Activated B cell treated with CpG ODN at 0.5 μM for 24 hours (primary cell): ENCODE measurements at regions of chr4 and their contacts with region 1.

Region 1: DNA sequence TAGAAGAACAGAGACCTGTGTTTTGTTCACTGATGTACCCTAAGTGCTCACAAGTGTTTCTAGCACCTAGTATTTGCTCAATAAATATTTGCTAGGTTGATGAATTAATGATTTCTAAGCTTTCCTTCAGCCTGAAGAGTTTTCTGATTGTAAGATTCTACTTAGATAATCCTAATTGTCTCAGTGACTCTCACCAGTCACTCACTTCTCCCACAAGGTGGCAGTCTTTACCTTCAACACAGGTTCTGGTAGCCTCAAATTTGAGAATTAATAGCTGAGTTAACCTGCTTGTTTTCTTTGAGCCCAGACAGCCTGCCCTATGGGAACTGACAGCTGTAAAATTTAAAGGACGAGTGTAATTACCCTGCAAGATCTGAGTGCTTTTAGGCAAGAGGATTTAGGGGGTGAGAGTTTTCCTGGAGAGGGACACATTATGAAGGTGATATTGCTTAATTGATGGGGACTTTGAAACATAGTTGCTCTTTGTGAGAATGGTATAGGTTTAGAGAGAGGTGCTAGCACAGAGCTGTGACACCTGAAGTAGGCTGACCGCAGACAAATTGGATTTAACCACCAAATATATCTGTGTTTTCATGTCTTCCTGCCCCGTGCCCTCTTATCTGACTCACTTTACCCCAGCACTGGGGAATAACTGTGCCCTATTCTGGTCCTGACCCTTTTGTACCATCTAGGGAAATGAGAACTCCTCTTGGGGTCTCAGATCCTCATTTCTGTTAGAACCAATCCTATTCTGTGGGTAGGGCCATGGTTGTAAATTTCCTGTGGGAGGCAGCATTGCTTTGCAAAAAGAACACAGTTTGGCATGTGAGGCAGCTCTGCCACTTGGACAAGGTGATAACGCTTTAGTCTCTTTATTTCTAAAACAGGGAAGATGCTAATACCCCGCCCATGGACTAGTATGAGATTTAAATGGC is 27.7 kb downstream of the CD38 start:
- DNase-seq: no peak
- ATAC-seq: peak; percentile 81
- H3K4me3 Mint-ChIP-seq: no peak overlapping the region
- H3K27ac Mint-ChIP-seq: no peak overlapping the region
- H3K4me1 Mint-ChIP-seq: peaks cover 50% of the 10 kb centered on the region
- H3K27me3 Mint-ChIP-seq: no peaks in the 10 kb centered on the region
- CTCF ChIP-seq: peak; percentile 20

Region 2: DNA sequence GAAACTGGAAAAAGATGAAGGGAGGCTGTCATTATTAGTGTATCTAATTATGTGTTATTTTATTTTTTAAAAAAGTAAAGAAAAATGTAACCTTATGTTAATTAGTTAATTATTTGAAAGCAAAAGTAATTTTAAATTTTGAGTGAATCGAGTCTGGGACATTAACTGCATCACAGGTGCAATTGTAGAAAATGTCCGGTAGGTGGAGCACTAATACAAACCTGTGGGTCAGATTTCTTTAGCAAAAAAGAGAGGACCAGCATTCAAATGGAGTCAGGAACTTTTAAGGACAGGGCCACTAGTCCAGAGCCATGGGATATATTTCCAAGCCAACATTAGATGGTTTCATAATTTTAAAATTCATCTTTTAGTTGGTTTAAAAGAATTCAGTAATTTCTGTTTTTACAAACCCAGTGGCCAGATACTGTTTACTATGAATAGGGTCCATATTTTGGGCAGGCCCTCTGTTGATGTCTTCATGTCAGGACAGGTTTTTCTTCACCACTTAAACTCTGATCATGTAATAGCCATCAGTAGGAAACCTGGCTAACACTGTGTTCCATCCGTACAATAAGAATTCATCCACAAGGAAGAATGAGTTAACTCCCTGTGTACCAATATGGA is 75.8 kb before region 1 on chr4:
- CTCF ChIA-PET with region 1: interaction called, 15 read pairs
- POLR2A ChIA-PET with region 1: no interaction called
- intact Hi-C with region 1: loop called (anchors 2 kb)
- DNase-seq: no peak
- ATAC-seq: no peak
- H3K4me3 Mint-ChIP-seq: no peak overlapping the region
- H3K27ac Mint-ChIP-seq: no peak overlapping the region
- H3K4me1 Mint-ChIP-seq: no peaks in the 10 kb centered on the region
- H3K27me3 Mint-ChIP-seq: no peaks in the 10 kb centered on the region
- CTCF ChIP-seq: peak; percentile 45

Region 3: GRCh38 chr4:15882675-15883086 is 76.8 kb after region 1 on chr4:
- CTCF ChIA-PET with region 1: interaction called, 46 read pairs
- POLR2A ChIA-PET with region 1: interaction called, 4 read pairs
- intact Hi-C with region 1: loop called (anchors 1 kb)
- DNase-seq: no peak
- ATAC-seq: peak; percentile 82
- H3K4me3 Mint-ChIP-seq: no peak overlapping the region
- H3K27ac Mint-ChIP-seq: no peak overlapping the region
- H3K4me1 Mint-ChIP-seq: peaks cover 2% of the 10 kb centered on the region
- H3K27me3 Mint-ChIP-seq: peaks cover 2% of the 10 kb centered on the region
- CTCF ChIP-seq: peak; percentile 85

Region 4: GRCh38 chr4:16001484-16001858 is 195.6 kb after region 1 on chr4:
- CTCF ChIA-PET with region 1: interaction called, 53 read pairs
- POLR2A ChIA-PET with region 1: no interaction called
- intact Hi-C with region 1: loop called (anchors 1 kb)
- DNase-seq: peak; percentile 24
- ATAC-seq: peak; percentile 88
- H3K4me3 Mint-ChIP-seq: no peak overlapping the region
- H3K27ac Mint-ChIP-seq: no peak overlapping the region
- H3K4me1 Mint-ChIP-seq: no peaks in the 10 kb centered on the region
- H3K27me3 Mint-ChIP-seq: no peaks in the 10 kb centered on the region
- CTCF ChIP-seq: no peak

Region 5: GRCh38 chr4:16443504-16444088 is 637.7 kb after region 1 on chr4:
- CTCF ChIA-PET with region 1: no interaction called
- POLR2A ChIA-PET with region 1: no interaction called
- intact Hi-C with region 1: loop called (anchors 5 kb)
- DNase-seq: no peak
- ATAC-seq: no peak
- H3K4me3 Mint-ChIP-seq: no peak overlapping the region
- H3K27ac Mint-ChIP-seq: no peak overlapping the region
- H3K4me1 Mint-ChIP-seq: peaks cover 1% of the 10 kb centered on the region
- H3K27me3 Mint-ChIP-seq: peaks cover 2% of the 10 kb centered on the region
- CTCF ChIP-seq: peak; percentile 33